K562 (cell line): ENCODE measurements at regions of chr3 and their contacts with region 1.

Region 1: GRCh38 chr3:38117748-38118420 is 19.0 kb downstream of the ACAA1 start:
- DNase-seq: peak; percentile 83 to 87 (median 84)
- ATAC-seq: peak; percentile 90
- H3K4me3 ChIP-seq: no peak overlapping the region
- H3K27ac ChIP-seq: no peak overlapping the region
- H3K4me1 ChIP-seq: peaks cover 0 to 30% of the 10 kb centered on the region in 2 experiments; a peak in 3 of 5 replicates
- H3K27me3 ChIP-seq: peaks cover 6 to 26% of the 10 kb centered on the region in 2 experiments; a peak in 3 of 5 replicates
- CTCF ChIP-seq: peak; percentile 95 to 98 (median 97)
- EP300 ChIP-seq: no peak
- POLR2A ChIP-seq: 0 out of 2 replicates have a peak, but pooled peaks have one; percentile 21
- RAD21 ChIP-seq: peak; percentile 83 to 95

Region 2: DNA sequence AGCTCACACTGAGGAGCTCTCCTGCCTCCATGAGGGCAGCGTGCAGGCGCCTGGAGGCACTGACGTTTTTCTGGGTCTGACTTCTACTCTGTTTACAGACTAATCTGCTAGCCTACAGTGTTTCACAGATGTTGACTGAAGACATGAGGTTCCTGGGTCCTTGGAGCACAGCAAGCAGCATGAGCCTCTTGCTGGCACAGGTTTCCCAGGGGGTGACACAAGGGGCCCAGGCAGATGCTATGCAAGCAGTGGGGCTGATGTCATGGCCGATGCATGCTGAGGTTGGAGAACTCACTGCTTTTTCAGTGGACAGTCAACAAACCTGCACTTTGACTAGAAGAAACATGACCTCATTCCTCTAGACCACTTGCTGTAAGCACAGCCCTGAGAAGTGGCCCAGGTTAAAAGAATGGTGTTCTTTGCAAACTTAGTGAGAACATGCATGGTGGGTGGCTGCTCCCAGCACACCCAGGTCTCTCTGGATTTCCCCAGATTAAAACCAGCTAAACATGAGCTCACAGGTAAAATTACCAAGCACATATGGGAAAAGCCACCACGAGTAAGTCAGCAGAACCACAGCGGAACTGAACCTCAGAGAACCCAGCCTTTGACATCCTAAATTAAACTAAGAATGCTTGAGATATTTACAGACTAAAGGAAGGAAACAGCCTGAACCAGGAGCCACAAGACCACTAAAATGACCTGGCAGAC is 63.4 kb before region 1 on chr3:
- CTCF ChIA-PET with region 1: no interaction called
- POLR2A ChIA-PET with region 1: no interaction called
- in situ Hi-C with region 1: no loop called
- intact Hi-C with region 1: no loop called
- DNase-seq: no peak
- ATAC-seq: peak; percentile 18; the same call in 1 of the 3 replicates
- H3K4me3 ChIP-seq: no peak overlapping the region
- H3K27ac ChIP-seq: no peak overlapping the region
- H3K4me1 ChIP-seq: peaks cover 0 to 3% of the 10 kb centered on the region in 2 experiments; a peak in 1 of 5 replicates
- H3K27me3 ChIP-seq: peaks cover 52 to 58% of the 10 kb centered on the region in 2 experiments
- CTCF ChIP-seq: no peak
- EP300 ChIP-seq: no peak
- POLR2A ChIP-seq: no peak
- RAD21 ChIP-seq: no peak

Region 3: GRCh38 chr3:38088126-38089078 is 29.5 kb before region 1 on chr3:
- CTCF ChIA-PET with region 1: no interaction called
- POLR2A ChIA-PET with region 1: no interaction called
- in situ Hi-C with region 1: no loop called
- intact Hi-C with region 1: no loop called
- DNase-seq: no peak
- ATAC-seq: no peak
- H3K4me3 ChIP-seq: no peak overlapping the region
- H3K27ac ChIP-seq: no peak overlapping the region
- H3K4me1 ChIP-seq: no peaks in the 10 kb centered on the region
- H3K27me3 ChIP-seq: peaks cover 31 to 32% of the 10 kb centered on the region in 2 experiments
- CTCF ChIP-seq: no peak
- EP300 ChIP-seq: no peak
- POLR2A ChIP-seq: no peak
- RAD21 ChIP-seq: no peak

Region 4: DNA sequence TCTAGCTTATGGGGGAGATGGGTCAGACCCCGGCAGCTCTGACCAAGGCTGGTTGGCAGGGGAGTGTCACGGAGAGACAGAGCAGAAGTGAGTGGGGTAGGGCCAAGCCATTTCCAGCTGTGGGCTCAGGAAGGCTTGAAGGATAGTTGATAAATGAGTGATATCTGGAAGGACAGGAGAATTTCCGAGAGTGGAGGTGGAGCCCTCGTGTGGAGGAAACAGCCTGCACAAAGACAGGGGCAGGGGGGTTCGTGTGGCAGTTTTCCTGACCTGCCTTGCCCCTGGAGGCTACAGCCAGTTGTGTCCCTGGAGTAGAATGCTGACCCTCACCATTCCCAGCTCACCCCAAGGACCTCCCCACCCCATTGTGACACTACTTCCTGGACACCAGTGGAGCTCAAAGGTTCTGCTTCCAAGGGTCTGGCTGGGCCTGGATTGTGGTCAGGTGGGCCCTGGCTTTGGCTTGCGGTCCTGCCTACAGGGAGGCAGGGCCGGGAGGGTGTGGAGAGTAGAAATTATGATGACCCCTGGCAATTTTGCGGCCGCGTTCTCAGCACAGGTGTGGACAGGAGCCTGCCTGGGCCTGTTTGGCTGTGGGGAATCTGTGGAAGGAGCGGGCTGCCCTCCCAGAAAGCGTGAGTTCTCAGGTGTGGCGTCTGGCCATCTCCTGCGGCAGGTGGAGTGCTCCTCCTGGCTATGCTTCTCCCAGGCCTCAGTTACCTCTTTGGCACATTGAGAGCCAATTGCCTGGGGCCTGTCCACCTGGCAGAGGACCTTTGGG is 164.2 kb after region 1 on chr3 and contains the start of gene SLC22A14:
- CTCF ChIA-PET with region 1: no interaction called
- POLR2A ChIA-PET with region 1: interaction called, 3 read pairs
- in situ Hi-C with region 1: no loop called
- intact Hi-C with region 1: loop called (anchors 1 kb)
- DNase-seq: peak; percentile 43 to 65 (median 52)
- ATAC-seq: peak; percentile 86
- H3K4me3 ChIP-seq: no peak within 1 kb of the TSS
- H3K27ac ChIP-seq: no peak within 1 kb of the TSS
- H3K4me1 ChIP-seq: peaks cover 0 to 4% of the 10 kb centered on the region in 2 experiments; a peak in 2 of 5 replicates
- H3K27me3 ChIP-seq: peaks cover 4 to 5% of the 10 kb centered on the region in 2 experiments; a peak in 2 of 5 replicates
- CTCF ChIP-seq: peak; percentile 72 to 77 (median 72)
- EP300 ChIP-seq: no peak
- POLR2A ChIP-seq: no peak
- RAD21 ChIP-seq: peak in 1 of 2 experiments; percentile 70; a peak in 3 of 4 replicates
- polyA plus RNA-seq, gene SLC22A14: 0.03 TPM in 1 of 2 experiments, not detected in the other

Region 5: GRCh38 chr3:38346587-38347410 is 228.9 kb after region 1 on chr3 and contains the start of gene XYLB:
- CTCF ChIA-PET with region 1: interaction called, 3 read pairs
- POLR2A ChIA-PET with region 1: no interaction called
- in situ Hi-C with region 1: no loop called
- intact Hi-C with region 1: loop called (anchors 5 kb)
- DNase-seq: peak; percentile 96 to 97 (median 96)
- ATAC-seq: peak; percentile 96
- H3K4me3 ChIP-seq: peak within 1 kb of the TSS; percentile 98
- H3K27ac ChIP-seq: peak within 1 kb of the TSS; percentile 89
- H3K4me1 ChIP-seq: peaks cover 18 to 27% of the 10 kb centered on the region in 2 experiments; a peak in 4 of 5 replicates
- H3K27me3 ChIP-seq: no peaks in the 10 kb centered on the region
- CTCF ChIP-seq: peak; percentile 91 to 94 (median 93)
- EP300 ChIP-seq: no peak
- POLR2A ChIP-seq: peak; percentile 83
- RAD21 ChIP-seq: peak; percentile 77 to 82
- polyA plus RNA-seq, gene XYLB: 4.0 to 6.1 TPM

Region 6: DNA sequence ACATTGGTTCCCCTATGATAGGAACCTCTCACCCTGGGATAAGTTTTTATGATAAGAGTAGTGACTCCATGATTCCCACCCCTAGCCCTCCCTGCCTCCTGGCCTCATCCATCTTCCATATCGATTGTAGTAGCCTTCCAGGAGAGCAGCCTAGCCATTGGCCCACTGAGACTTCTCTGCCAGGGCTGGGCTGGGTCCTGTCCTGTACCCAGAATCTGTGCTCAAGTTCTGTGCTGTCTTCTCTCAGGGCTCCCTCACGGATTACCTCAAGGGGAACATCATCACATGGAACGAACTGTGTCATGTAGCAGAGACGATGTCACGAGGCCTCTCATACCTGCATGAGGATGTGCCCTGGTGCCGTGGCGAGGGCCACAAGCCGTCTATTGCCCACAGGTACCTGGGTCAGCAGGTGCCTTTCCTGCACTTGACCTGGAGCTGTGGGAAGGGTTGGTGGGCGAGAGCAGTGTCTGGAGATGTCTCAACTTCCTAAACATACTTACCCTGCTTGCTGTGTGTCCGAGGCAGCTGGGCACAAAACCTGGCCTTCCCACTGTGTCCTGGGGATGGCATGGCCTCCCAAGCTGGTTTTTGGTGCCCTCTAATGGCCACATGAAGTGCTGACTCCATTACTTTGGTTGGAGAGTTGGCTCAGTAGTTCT is 361.7 kb after region 1 on chr3:
- CTCF ChIA-PET with region 1: interaction called, 5 read pairs
- POLR2A ChIA-PET with region 1: no interaction called
- in situ Hi-C with region 1: no loop called
- intact Hi-C with region 1: loop called (anchors 5 kb)
- DNase-seq: peak; percentile 64 to 73 (median 70)
- ATAC-seq: peak; percentile 88
- H3K4me3 ChIP-seq: no peak overlapping the region
- H3K27ac ChIP-seq: no peak overlapping the region
- H3K4me1 ChIP-seq: peaks cover 0 to 3% of the 10 kb centered on the region in 2 experiments; a peak in 1 of 5 replicates
- H3K27me3 ChIP-seq: no peaks in the 10 kb centered on the region
- CTCF ChIP-seq: peak; percentile 80 to 91 (median 86)
- EP300 ChIP-seq: no peak
- POLR2A ChIP-seq: no peak
- RAD21 ChIP-seq: peak; percentile 85 to 87

Region 7: GRCh38 chr3:38651154-38651789 is 533.4 kb after region 1 on chr3:
- CTCF ChIA-PET with region 1: no interaction called
- POLR2A ChIA-PET with region 1: no interaction called
- in situ Hi-C with region 1: loop called (anchors 5 kb)
- intact Hi-C with region 1: no loop called
- DNase-seq: peak; percentile 78 to 86 (median 84)
- ATAC-seq: peak; percentile 76
- H3K4me3 ChIP-seq: no peak overlapping the region
- H3K27ac ChIP-seq: no peak overlapping the region
- H3K4me1 ChIP-seq: peaks cover 6 to 18% of the 10 kb centered on the region in 2 experiments
- H3K27me3 ChIP-seq: peaks cover 14 to 34% of the 10 kb centered on the region in 2 experiments; a peak in 4 of 5 replicates
- CTCF ChIP-seq: peak; percentile 95 to 99 (median 97)
- EP300 ChIP-seq: no peak
- POLR2A ChIP-seq: no peak
- RAD21 ChIP-seq: peak; percentile 66 to 82